Mammary epithelial cell (primary cell): ENCODE measurements at regions of chr9 and their contacts with region 1.

Region 1: GRCh38 chr9:89278997-89279739 is 31.8 kb upstream of the CKS2 start:
- DNase-seq: peak; percentile 49
- H3K4me3 ChIP-seq: no peak overlapping the region
- H3K27ac ChIP-seq: no peak overlapping the region
- H3K4me1 ChIP-seq: peaks cover 7% of the 10 kb centered on the region
- H3K27me3 ChIP-seq: no peaks in the 10 kb centered on the region
- CTCF ChIP-seq: peak; percentile 73 to 84

Region 2: DNA sequence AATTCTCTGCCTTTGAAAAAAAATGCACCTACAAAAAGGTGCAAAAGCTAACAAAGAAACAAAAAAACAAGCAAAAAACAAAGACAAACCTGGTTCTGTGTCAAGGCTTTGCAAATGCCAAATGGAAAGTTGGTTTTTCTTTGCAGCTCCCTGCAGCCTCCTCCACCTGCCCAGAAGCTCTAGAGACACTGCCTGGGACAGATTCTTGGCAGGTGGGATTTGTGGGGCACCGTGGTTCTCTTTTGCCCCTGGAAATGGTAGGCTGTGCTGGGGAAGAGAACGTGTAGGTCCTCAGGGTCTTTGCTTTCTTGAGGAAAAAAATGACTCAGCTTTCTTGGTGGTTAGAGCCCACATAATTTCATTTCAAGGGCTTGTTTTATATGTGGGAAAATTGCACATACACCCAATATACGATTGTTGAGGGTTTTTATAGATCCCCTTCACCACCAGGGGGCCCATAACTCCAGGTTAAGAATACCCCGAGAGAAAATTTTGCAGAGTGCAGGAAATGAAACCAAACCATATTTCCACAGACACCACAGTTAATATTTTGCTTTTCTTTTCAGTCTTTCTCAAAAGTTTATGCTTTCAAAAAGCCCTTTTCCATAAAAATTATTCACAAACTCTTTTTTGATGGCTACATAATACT is 685.5 kb before region 1 on chr9:
- CTCF ChIA-PET with region 1: no interaction called
- dilution Hi-C with region 1: no loop called
- in situ Hi-C with region 1: loop called in 1 of 2 experiments (anchors 25 kb)
- intact Hi-C with region 1: loop called (anchors 2 kb)
- DNase-seq: peak; percentile 28
- H3K4me3 ChIP-seq: no peak overlapping the region
- H3K27ac ChIP-seq: no peak overlapping the region
- H3K4me1 ChIP-seq: no peaks in the 10 kb centered on the region
- H3K27me3 ChIP-seq: peaks cover 4% of the 10 kb centered on the region
- CTCF ChIP-seq: peak; percentile 58 to 64

Region 3: DNA sequence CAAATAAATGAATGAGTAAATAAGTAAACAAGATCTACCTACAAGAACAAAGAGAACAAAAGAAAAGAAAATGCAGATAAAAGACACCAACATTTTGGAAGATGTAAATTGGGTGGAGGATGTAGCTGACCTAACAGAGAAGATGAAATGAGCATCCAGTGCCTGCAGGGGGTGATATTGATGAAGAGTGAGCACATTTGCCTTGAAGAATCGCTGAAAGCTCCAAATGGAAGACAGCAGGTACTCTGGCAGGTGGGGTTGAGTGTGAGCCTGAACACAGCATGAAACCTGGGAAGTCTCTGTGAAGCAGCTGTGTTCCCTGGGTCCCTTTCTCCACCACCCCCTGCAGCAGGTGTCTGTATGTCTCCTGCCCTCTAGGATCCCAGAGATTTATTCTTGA is 618.6 kb before region 1 on chr9:
- CTCF ChIA-PET with region 1: interaction called, 3 read pairs
- dilution Hi-C with region 1: no loop called
- in situ Hi-C with region 1: no loop called
- intact Hi-C with region 1: loop called (anchors 2 kb)
- DNase-seq: peak; percentile 50
- H3K4me3 ChIP-seq: no peak overlapping the region
- H3K27ac ChIP-seq: no peak overlapping the region
- H3K4me1 ChIP-seq: peaks cover 9% of the 10 kb centered on the region
- H3K27me3 ChIP-seq: no peaks in the 10 kb centered on the region
- CTCF ChIP-seq: peak; percentile 68 to 72

Region 4: GRCh38 chr9:88722753-88723152 is 556.4 kb before region 1 on chr9:
- CTCF ChIA-PET with region 1: no interaction called
- dilution Hi-C with region 1: no loop called
- in situ Hi-C with region 1: no loop called
- intact Hi-C with region 1: loop called (anchors 10 kb)
- DNase-seq: peak; percentile 37
- H3K4me3 ChIP-seq: no peak overlapping the region
- H3K27ac ChIP-seq: no peak overlapping the region
- H3K4me1 ChIP-seq: no peaks in the 10 kb centered on the region
- H3K27me3 ChIP-seq: no peaks in the 10 kb centered on the region
- CTCF ChIP-seq: peak; percentile 33 to 70

Region 5: GRCh38 chr9:89171695-89172315 is 107.4 kb before region 1 on chr9:
- CTCF ChIA-PET with region 1: no interaction called
- dilution Hi-C with region 1: no loop called
- in situ Hi-C with region 1: no loop called
- intact Hi-C with region 1: loop called (anchors 2 kb)
- DNase-seq: no peak
- H3K4me3 ChIP-seq: no peak overlapping the region
- H3K27ac ChIP-seq: no peak overlapping the region
- H3K4me1 ChIP-seq: peaks cover 11% of the 10 kb centered on the region
- H3K27me3 ChIP-seq: peaks cover 1% of the 10 kb centered on the region
- CTCF ChIP-seq: peak in 1 of 2 donors; percentile 46

Region 6: GRCh38 chr9:89234205-89235067 is 44.7 kb before region 1 on chr9:
- CTCF ChIA-PET with region 1: no interaction called
- dilution Hi-C with region 1: no loop called
- in situ Hi-C with region 1: no loop called
- intact Hi-C with region 1: no loop called
- DNase-seq: peak; percentile 10
- H3K4me3 ChIP-seq: no peak overlapping the region
- H3K27ac ChIP-seq: no peak overlapping the region
- H3K4me1 ChIP-seq: no peaks in the 10 kb centered on the region
- H3K27me3 ChIP-seq: peaks cover 6% of the 10 kb centered on the region
- CTCF ChIP-seq: no peak

Region 7: DNA sequence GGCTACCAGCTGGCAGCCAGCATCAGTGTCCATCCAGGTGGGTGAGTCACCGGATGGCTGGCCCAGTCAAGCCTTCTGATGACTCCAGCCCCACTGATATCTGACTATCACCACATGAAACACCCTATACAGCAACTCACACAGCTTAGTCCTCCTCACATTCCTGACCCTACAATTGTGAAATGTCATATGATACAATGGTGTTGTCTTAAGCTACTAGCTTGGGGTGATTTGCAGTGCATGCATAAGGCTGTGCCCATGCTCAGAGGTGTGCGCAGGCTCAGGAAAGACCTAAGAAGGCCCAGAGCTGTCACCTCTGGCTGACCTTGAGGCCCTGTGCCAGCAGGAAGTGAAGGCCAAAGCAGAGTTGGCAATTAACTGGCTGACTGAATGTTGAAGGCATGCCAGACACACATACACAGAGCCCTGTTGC is 240.2 kb after region 1 on chr9:
- CTCF ChIA-PET with region 1: no interaction called
- dilution Hi-C with region 1: no loop called
- in situ Hi-C with region 1: no loop called
- intact Hi-C with region 1: no loop called
- DNase-seq: peak; percentile 85
- H3K4me3 ChIP-seq: no peak overlapping the region
- H3K27ac ChIP-seq: no peak overlapping the region
- H3K4me1 ChIP-seq: no peaks in the 10 kb centered on the region
- H3K27me3 ChIP-seq: no peaks in the 10 kb centered on the region
- CTCF ChIP-seq: no peak